RWPE1 (cell line): ENCODE measurements at regions of chr2 and their contacts with region 1.

Region 1: DNA sequence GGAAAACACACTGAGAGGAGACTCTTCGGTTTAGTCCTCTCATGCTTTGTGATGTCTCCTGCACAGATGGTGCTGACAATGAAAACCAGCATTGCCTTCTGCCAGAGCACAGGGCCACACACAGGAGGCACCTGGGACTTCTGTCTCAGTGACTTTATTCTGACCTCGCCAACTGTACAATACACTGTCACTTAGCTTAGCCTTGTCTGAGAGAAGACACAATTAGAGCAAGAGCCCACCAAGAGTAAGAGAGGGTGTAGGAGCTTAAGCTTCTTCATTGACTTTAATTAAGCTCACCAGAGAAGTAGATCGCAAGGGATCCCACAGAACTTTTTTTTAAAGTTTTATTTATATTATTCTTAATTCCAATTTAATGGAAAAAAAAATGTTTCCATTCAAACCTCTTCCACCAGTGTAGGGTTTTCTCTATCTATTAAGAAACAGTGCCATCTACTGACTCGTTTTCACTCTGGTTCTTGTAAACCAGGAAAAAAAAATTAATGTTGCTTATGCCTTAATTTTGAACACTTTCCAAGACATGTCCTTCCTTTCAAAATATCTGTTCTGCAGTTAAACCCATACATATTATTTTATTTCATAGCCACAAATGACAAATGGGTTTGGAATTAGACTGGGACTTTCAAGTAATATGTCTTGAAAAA is 42.4 kb upstream of the DDX18 start:
- DNase-seq: peak; percentile 19
- H3K27ac ChIP-seq: no peak overlapping the region
- CTCF ChIP-seq: peak; percentile 44

Region 2: DNA sequence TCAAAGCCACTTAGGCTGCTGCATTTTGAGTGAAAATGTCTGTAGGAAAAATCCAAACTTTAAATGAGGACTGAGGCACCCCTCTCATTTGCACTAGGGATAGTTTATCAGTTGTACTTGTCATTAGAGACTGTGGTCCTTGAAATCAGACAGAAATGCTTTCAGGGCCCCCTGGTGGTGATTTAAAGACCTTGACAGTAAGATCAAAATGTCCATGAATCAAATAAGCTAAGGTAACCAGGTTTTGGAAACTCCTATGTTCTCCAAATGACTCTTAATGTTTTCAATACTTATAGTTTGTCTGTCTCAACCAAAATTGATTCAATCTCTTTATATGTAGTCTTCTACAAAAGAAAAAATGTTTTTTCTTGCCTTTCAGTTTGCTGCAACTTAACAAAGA is 13.6 kb after region 1 on chr2:
- CTCF ChIA-PET with region 1: interaction called, 11 read pairs
- POLR2A ChIA-PET with region 1: no interaction called
- DNase-seq: peak; percentile 38
- H3K27ac ChIP-seq: no peak overlapping the region
- CTCF ChIP-seq: peak; percentile 70

Region 3: GRCh38 chr2:117856415-117857210 is 84.5 kb after region 1 on chr2:
- CTCF ChIA-PET with region 1: no interaction called
- POLR2A ChIA-PET with region 1: no interaction called
- DNase-seq: peak; percentile 66
- H3K27ac ChIP-seq: no peak overlapping the region
- CTCF ChIP-seq: no peak